ENCODE measurements at regions of chr10 and their contacts with region 1.

Region 1: GRCh38 chr10:101782811-101783735 is at the start of gene NPM3:
- DNase-seq: peak; percentile 93
- CTCF ChIP-seq: no peak

Region 2: DNA sequence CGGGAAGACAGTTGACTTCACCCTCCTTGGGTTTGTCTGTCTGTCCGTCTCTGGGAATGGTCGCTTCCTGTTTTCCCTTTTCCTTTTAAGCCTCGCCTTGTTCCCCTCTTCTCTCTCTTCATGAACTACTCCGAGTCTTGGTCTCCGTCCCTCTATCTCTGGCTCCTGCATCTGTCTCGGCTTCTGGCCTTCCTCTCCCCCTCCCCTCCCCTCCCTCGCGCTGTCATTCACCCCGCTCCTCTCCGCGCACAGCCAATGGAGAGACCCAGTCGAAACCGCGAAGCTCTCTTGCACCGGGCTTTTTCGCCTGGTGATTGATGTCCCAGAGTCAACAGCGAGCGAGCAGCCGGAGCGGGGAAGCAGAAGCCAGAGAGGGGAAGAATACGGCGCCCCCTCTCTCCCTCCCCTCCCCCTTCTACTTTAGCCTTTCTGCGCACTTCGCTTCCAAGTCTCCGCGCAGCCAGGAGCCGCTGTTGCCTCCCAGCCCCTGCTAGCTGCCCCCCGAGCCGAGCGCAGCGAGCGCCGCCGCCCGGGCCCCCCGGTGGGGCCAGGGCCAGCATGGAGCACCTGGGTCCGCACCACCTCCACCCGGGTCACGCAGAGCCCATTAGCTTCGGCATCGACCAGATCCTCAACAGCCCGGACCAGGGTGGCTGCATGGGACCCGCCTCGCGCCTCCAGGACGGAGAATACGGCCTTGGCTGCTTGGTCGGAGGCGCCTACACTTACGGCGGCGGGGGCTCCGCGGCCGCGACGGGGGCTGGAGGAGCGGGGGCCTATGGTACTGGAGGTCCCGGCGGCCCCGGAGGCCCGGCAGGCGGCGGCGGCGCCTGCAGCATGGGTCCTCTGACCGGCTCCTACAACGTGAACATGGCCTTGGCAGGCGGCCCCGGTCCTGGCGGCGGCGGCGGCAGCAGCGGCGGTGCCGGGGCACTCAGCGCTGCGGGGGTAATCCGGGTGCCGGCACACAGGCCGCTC is 651.8 kb before region 1 on chr10 and contains the start of gene TLX1:
- in situ Hi-C with region 1: no loop called
- DNase-seq: no peak
- CTCF ChIP-seq: no peak

Region 3: GRCh38 chr10:101609481-101609880 is 173.6 kb before region 1 on chr10:
- in situ Hi-C with region 1: loop called (anchors 5 kb)
- DNase-seq: no peak
- CTCF ChIP-seq: no peak